Activated naive CD4-positive, alpha-beta T cell treated with anti-CD3 and anti-CD28 coated beads for 36 hours (primary cell): ENCODE measurements at regions of chr4 and their contacts with region 1.

Region 1: GRCh38 chr4:80184053-80184790 is 13.1 kb upstream of the PRDM8 start:
- DNase-seq: peak; percentile 90
- H3K4me3 Mint-ChIP-seq: peak overlapping the region; percentile 97
- H3K27ac Mint-ChIP-seq: peak overlapping the region; percentile 70
- H3K4me1 Mint-ChIP-seq: peaks cover 46% of the 10 kb centered on the region
- H3K27me3 Mint-ChIP-seq: peaks cover 11% of the 10 kb centered on the region

Region 2: GRCh38 chr4:79831701-79832514 is 352.3 kb before region 1 on chr4:
- CTCF ChIA-PET with region 1: no interaction called
- intact Hi-C with region 1: loop called (anchors 1 kb)
- DNase-seq: no peak
- H3K4me3 Mint-ChIP-seq: no peak overlapping the region
- H3K27ac Mint-ChIP-seq: no peak overlapping the region
- H3K4me1 Mint-ChIP-seq: peaks cover 12% of the 10 kb centered on the region
- H3K27me3 Mint-ChIP-seq: peaks cover 8% of the 10 kb centered on the region

Region 3: DNA sequence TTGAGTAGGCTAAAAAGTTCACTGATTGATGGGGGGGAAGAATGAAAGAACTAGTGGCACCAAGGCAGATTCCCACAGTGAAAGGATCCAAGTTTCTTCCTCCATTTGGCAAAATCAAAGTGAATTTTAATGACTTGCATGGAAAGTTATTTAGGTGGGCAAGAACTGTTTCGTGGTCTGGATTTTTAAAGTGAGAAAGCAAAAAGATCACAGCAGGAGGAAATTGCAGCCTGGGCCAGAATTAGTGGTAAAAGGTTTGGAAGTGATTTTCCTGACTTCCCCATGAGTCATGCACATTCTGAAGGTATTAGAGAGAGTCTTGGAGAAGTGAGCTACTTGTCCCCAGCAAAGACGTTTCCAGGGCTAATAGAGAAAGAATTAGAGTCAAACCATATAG is 319.0 kb before region 1 on chr4:
- CTCF ChIA-PET with region 1: no interaction called
- intact Hi-C with region 1: no loop called
- DNase-seq: no peak
- H3K4me3 Mint-ChIP-seq: no peak overlapping the region
- H3K27ac Mint-ChIP-seq: no peak overlapping the region
- H3K4me1 Mint-ChIP-seq: no peaks in the 10 kb centered on the region
- H3K27me3 Mint-ChIP-seq: peaks cover 4% of the 10 kb centered on the region

Region 4: GRCh38 chr4:80007745-80008149 is 176.5 kb before region 1 on chr4:
- CTCF ChIA-PET with region 1: no interaction called
- intact Hi-C with region 1: loop called (anchors 2 kb)
- DNase-seq: no peak
- H3K4me3 Mint-ChIP-seq: no peak overlapping the region
- H3K27ac Mint-ChIP-seq: no peak overlapping the region
- H3K4me1 Mint-ChIP-seq: peaks cover 38% of the 10 kb centered on the region
- H3K27me3 Mint-ChIP-seq: no peaks in the 10 kb centered on the region

Region 5: DNA sequence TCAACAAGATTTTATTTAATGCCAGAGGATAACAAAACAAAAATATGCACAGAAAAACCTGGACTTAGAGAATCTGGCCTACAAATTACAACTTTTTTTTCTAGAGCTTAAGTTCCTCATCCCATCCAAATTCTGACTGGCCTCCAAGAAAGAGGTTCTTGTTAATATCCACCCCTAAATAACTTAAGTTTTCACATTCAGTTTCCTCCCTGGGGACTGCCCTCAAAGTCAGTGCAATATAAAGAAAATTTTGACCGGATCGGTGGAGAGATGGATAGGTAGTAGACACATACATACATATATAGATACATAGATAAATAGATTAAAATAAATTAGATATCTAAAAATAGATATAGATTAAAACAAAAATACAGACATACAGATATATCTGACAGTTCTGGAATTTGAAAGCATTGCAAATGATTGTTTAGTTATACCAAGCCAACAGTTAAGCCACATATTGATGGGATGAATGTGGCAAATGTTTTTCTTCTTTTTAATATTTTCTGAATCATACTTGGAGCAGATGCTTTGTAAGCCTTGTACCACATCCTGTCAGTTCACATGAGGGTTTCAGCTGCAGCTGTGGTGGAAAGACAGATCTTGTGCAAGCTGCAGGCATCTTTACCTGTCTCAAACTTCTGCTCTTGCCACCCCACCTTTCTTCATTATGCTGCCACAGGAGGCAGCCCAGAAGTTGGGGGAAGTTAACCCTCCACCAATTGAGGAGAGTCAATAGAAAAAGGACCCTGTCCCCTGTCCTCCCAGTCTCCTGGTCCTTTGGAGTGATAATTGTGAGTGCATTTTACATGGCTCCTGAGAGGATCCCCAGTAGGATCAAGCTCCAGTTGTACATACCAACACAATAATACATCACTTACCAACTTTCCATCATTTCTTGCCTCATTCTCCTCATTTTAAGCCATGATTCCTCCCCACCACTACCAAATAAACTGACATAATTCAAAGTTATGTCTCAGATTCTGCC is 45.4 kb before region 1 on chr4:
- CTCF ChIA-PET with region 1: interaction called, 5 read pairs
- intact Hi-C with region 1: loop called (anchors 1 kb)
- DNase-seq: peak; percentile 82
- H3K4me3 Mint-ChIP-seq: no peak overlapping the region
- H3K27ac Mint-ChIP-seq: no peak overlapping the region
- H3K4me1 Mint-ChIP-seq: peaks cover 57% of the 10 kb centered on the region
- H3K27me3 Mint-ChIP-seq: no peaks in the 10 kb centered on the region

Region 6: GRCh38 chr4:80202190-80202711 is 18.0 kb after region 1 on chr4:
- CTCF ChIA-PET with region 1: interaction called, 25 read pairs
- intact Hi-C with region 1: loop called (anchors 1 kb)
- DNase-seq: peak; percentile 79
- H3K4me3 Mint-ChIP-seq: peak overlapping the region; percentile 70
- H3K27ac Mint-ChIP-seq: no peak overlapping the region
- H3K4me1 Mint-ChIP-seq: peaks cover 20% of the 10 kb centered on the region
- H3K27me3 Mint-ChIP-seq: peaks cover 20% of the 10 kb centered on the region